Kidney (tissue), 22 donors: ENCODE measurements at regions of chr17 and their contacts with region 1.

Region 1: GRCh38 chr17:47315451-47316266 is 8.1 kb upstream of the EFCAB13 start:
- DNase-seq: peak in 2 of 5 donors; percentile 73 to 84
- H3K4me3 ChIP-seq: no peak overlapping the region
- H3K27ac ChIP-seq: no peak overlapping the region
- H3K4me1 ChIP-seq: peaks cover 0 to 6% (median 0%) of the 10 kb centered on the region in 3 donors
- H3K27me3 ChIP-seq: no peaks in the 10 kb centered on the region
- CTCF ChIP-seq: peak; percentile 81

Region 2: DNA sequence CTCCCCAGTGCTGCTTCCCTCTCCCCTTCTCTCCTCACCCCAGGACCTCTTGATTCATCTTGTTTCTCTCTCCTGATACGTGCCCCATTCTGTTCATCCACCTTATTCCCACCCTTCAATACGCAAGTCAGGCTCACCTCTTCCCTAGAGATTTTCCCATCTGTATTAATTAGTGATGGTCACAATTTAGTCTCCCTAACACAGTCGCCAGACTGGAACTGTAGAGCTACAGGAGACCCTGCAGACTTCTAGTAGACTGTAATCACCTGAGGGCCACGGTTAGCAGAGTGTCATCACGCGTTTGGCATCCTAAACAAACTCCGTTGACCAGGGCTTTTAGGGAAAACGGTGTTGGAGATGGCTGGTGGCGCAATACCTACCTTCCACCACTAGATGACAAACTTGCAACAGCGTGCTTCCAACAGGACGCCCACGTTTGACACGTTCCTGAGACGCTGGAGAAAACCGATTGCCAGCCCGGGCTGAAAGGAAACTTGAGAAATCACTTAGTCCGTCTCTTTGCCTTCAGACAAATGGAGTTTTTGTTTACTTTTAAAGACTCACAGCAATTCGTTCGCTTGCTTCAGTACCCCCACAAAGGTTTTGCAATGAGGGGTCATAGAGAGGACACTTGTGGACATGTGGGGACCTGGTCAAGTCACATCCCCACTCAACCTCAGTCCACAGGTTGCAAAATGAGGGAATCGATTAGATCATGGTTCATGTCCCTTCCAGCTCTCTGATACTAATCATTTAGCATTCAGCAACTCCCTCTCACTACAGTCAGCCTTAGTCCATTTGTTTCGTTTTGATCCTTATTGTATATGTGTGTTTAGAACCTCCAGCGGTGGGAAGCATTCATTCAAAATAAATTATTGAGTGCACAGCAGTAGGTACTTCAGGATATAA is 85.9 kb before region 1 on chr17:
- intact Hi-C with region 1: loop called (anchors 5 kb)
- DNase-seq: peak; percentile 87 to 95 (median 92)
- H3K4me3 ChIP-seq: peak overlapping the region in 2 of 3 donors; percentile 63 to 64
- H3K27ac ChIP-seq: peak overlapping the region; percentile 53 to 66
- H3K4me1 ChIP-seq: peaks cover 3 to 26% (median 18%) of the 10 kb centered on the region in 3 donors
- H3K27me3 ChIP-seq: no peaks in the 10 kb centered on the region
- CTCF ChIP-seq: peak; percentile 100

Region 3: DNA sequence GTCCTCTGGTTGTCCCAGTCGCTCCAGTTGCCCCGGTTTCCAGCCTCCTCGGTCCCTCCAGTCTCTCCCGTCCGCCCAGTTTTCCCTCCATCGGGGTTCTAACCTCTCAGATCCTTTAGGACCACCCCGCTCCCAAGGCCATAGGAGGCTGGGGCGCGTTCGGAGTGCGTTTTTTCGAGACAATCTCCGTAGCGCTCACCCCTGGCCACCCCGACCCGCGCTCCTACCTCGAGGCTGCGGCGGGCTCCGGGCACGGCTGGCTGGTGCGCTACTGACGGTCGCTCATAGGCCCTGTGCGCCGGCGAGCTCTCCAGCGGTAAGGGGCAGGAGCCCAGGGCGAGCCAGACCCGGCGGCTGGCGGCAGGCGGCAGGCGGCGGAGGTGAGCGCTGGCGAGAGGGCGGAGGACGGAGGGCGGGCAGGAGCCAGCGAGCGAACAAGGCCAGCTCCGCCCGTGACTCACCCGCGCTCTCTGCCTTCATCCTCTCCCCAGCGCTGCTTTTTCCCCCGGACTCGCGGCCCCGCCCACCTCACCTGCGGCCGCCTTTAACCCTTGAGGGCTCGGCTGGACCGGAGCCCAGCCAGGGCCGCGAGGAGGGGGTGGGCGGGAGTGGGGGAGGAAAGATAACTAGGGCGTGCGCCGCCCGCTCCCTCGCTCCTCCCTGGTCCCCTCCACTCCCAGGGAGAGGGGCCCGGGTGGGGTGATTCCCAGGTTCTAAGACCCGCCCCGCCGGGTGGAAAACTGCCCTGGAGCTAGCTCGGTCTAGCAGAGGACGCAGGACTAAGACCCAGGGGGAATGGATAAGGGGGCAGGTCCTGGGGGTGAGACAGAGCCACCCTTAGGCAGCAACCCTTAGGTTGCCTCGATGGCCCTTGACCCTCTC is 535.3 kb after region 1 on chr17 and contains the start of gene SP6:
- intact Hi-C with region 1: no loop called
- DNase-seq: peak; percentile 83 to 94 (median 85)
- H3K4me3 ChIP-seq: peak within 1 kb of the TSS; percentile 11 to 46 (median 31)
- H3K27ac ChIP-seq: peak within 1 kb of the TSS in 1 of 2 donors; percentile 17
- H3K4me1 ChIP-seq: peaks cover 0 to 10% (median 3%) of the 10 kb centered on the region in 3 donors
- H3K27me3 ChIP-seq: peaks cover 44% of the 10 kb centered on the region
- CTCF ChIP-seq: peak; percentile 11
- total RNA-seq, gene SP6: 2.0 TPM